B cell (primary cell): ENCODE measurements at regions of chr9 and their contacts with region 1.

Region 1: GRCh38 chr9:21789541-21790037 is 12.8 kb upstream of the MTAP start:
- DNase-seq: peak; percentile 86
- ATAC-seq: peak; percentile 97
- H3K4me3 ChIP-seq: peak overlapping the region; percentile 15 to 54 (median 46)
- H3K4me3 Mint-ChIP-seq: peak overlapping the region; percentile 77
- H3K27ac ChIP-seq: no peak overlapping the region
- H3K27ac Mint-ChIP-seq: peak overlapping the region; percentile 17
- H3K4me1 ChIP-seq: no peaks in the 10 kb centered on the region
- H3K4me1 Mint-ChIP-seq: peaks cover 3% of the 10 kb centered on the region
- H3K27me3 ChIP-seq: peaks cover 0 to 14% (median 6%) of the 10 kb centered on the region in 4 experiments
- H3K27me3 Mint-ChIP-seq: peaks cover 22% of the 10 kb centered on the region
- CTCF ChIP-seq: peak; percentile 99

Region 2: GRCh38 chr9:20884985-20885593 is 904.5 kb before region 1 on chr9:
- CTCF ChIA-PET with region 1: no interaction called
- POLR2A ChIA-PET with region 1: no interaction called
- intact Hi-C with region 1: no loop called
- DNase-seq: peak; percentile 45
- ATAC-seq: no peak
- H3K4me3 ChIP-seq: no peak overlapping the region
- H3K4me3 Mint-ChIP-seq: no peak overlapping the region
- H3K27ac ChIP-seq: no peak overlapping the region
- H3K27ac Mint-ChIP-seq: no peak overlapping the region
- H3K4me1 ChIP-seq: no peaks in the 10 kb centered on the region
- H3K4me1 Mint-ChIP-seq: no peaks in the 10 kb centered on the region
- H3K27me3 ChIP-seq: no peaks in the 10 kb centered on the region
- H3K27me3 Mint-ChIP-seq: no peaks in the 10 kb centered on the region
- CTCF ChIP-seq: peak; percentile 75

Region 3: DNA sequence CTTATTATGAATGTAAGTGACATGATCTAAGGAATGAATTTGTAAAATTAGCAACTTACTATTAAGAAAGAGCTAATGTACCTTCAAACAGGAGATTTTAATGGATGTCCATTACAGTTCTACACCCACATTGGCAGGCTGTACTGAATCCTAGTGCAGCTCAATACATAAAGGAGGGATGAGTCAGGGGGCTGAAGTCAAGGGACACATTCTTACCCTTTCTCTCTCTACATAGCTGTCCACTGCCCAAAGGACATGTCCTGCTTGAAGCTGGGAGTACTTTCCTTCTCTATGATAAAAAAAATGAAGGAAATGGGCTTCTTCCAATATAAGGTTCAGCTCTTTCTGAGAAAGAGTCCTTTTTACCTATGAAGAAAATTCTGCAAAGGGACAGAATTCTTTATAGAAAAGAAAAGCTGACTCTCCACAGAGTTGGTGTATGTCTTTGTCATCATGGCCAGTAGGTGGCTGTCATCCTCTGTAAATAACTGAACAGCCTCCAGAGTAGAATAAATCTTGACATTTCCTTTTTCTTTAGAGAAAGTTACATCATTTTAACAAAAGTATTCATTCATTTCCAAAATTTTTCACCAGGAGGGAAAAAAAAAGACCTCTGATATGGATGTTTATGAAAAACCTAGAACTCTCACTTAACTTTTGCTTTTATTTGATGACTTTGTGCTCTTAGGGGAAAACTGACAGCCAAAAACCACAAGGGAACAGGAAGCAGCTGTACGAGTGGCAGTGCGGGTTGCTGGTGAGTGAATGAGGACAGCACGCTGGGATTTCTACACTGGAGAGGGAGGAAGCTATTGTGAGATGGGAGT is 536.7 kb before region 1 on chr9:
- CTCF ChIA-PET with region 1: interaction called, 11 read pairs
- POLR2A ChIA-PET with region 1: no interaction called
- intact Hi-C with region 1: loop called (anchors 1 kb)
- DNase-seq: peak; percentile 23
- ATAC-seq: peak; percentile 43
- H3K4me3 ChIP-seq: no peak overlapping the region
- H3K4me3 Mint-ChIP-seq: no peak overlapping the region
- H3K27ac ChIP-seq: no peak overlapping the region
- H3K27ac Mint-ChIP-seq: no peak overlapping the region
- H3K4me1 ChIP-seq: peaks cover 2 to 3% of the 10 kb centered on the region in 2 donors
- H3K4me1 Mint-ChIP-seq: peaks cover 5% of the 10 kb centered on the region
- H3K27me3 ChIP-seq: no peaks in the 10 kb centered on the region
- H3K27me3 Mint-ChIP-seq: peaks cover 45% of the 10 kb centered on the region
- CTCF ChIP-seq: peak; percentile 69

Region 4: DNA sequence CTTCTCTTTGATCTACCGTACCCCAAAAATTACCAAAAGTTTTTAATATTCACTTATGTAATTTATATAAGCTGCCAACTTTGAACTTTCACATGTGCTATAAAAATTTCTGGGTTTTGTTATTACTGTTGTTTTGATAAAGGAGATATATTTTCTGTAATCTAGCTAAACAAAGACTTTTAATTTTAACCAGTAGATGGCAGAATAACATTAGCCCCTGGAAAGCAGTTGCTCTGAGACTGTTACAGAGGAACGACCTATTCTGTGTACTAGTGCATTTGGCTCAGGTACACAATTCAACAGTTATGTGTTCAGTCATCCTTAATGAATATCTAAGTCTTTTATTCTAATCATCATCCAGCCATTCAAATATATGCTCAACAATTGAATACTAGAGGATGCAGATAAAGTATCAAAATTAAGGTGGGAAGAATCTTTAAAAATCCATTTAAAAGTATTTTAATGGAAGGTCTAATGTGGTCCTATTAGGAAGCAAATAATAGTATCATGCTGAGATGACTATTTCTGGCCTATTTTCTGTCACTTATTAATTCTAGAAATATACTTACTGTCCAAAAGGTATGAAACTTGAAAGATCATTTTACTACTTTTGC is 463.0 kb before region 1 on chr9:
- CTCF ChIA-PET with region 1: interaction called, 24 read pairs
- POLR2A ChIA-PET with region 1: no interaction called
- intact Hi-C with region 1: loop called (anchors 1 kb)
- DNase-seq: peak; percentile 70
- ATAC-seq: peak; percentile 80
- H3K4me3 ChIP-seq: no peak overlapping the region
- H3K4me3 Mint-ChIP-seq: no peak overlapping the region
- H3K27ac ChIP-seq: no peak overlapping the region
- H3K27ac Mint-ChIP-seq: no peak overlapping the region
- H3K4me1 ChIP-seq: peaks cover 2 to 3% of the 10 kb centered on the region in 2 donors
- H3K4me1 Mint-ChIP-seq: peaks cover 26% of the 10 kb centered on the region
- H3K27me3 ChIP-seq: no peaks in the 10 kb centered on the region
- H3K27me3 Mint-ChIP-seq: no peaks in the 10 kb centered on the region
- CTCF ChIP-seq: peak; percentile 90

Region 5: GRCh38 chr9:21465859-21466518 is 323.6 kb before region 1 on chr9:
- CTCF ChIA-PET with region 1: interaction called, 3 read pairs
- POLR2A ChIA-PET with region 1: no interaction called
- intact Hi-C with region 1: loop called (anchors 10 kb)
- DNase-seq: peak; percentile 37
- ATAC-seq: no peak
- H3K4me3 ChIP-seq: no peak overlapping the region
- H3K4me3 Mint-ChIP-seq: no peak overlapping the region
- H3K27ac ChIP-seq: no peak overlapping the region
- H3K27ac Mint-ChIP-seq: no peak overlapping the region
- H3K4me1 ChIP-seq: no peaks in the 10 kb centered on the region
- H3K4me1 Mint-ChIP-seq: no peaks in the 10 kb centered on the region
- H3K27me3 ChIP-seq: peaks cover 0 to 14% (median 2%) of the 10 kb centered on the region in 4 experiments
- H3K27me3 Mint-ChIP-seq: peaks cover 29% of the 10 kb centered on the region
- CTCF ChIP-seq: peak; percentile 54

Region 6: GRCh38 chr9:21688108-21689102 is 101.2 kb before region 1 on chr9:
- CTCF ChIA-PET with region 1: no interaction called
- POLR2A ChIA-PET with region 1: no interaction called
- intact Hi-C with region 1: no loop called
- DNase-seq: no peak
- ATAC-seq: no peak
- H3K4me3 ChIP-seq: no peak overlapping the region
- H3K4me3 Mint-ChIP-seq: no peak overlapping the region
- H3K27ac ChIP-seq: no peak overlapping the region
- H3K27ac Mint-ChIP-seq: no peak overlapping the region
- H3K4me1 ChIP-seq: no peaks in the 10 kb centered on the region
- H3K4me1 Mint-ChIP-seq: no peaks in the 10 kb centered on the region
- H3K27me3 ChIP-seq: peaks cover 0 to 5% (median 0%) of the 10 kb centered on the region in 4 experiments
- H3K27me3 Mint-ChIP-seq: peaks cover 4% of the 10 kb centered on the region
- CTCF ChIP-seq: no peak

Region 7: GRCh38 chr9:21777701-21778100 is 11.9 kb before region 1 on chr9:
- CTCF ChIA-PET with region 1: interaction called, 10 read pairs
- POLR2A ChIA-PET with region 1: no interaction called
- intact Hi-C with region 1: no loop called
- DNase-seq: no peak
- ATAC-seq: no peak
- H3K4me3 ChIP-seq: no peak overlapping the region
- H3K4me3 Mint-ChIP-seq: no peak overlapping the region
- H3K27ac ChIP-seq: no peak overlapping the region
- H3K27ac Mint-ChIP-seq: no peak overlapping the region
- H3K4me1 ChIP-seq: peaks cover 0 to 7% of the 10 kb centered on the region in 2 donors
- H3K4me1 Mint-ChIP-seq: no peaks in the 10 kb centered on the region
- H3K27me3 ChIP-seq: peaks cover 0 to 3% (median 0%) of the 10 kb centered on the region in 4 experiments
- H3K27me3 Mint-ChIP-seq: peaks cover 4% of the 10 kb centered on the region
- CTCF ChIP-seq: no peak

Region 8: GRCh38 chr9:22030101-22030598 is 240.6 kb after region 1 on chr9:
- CTCF ChIA-PET with region 1: no interaction called
- POLR2A ChIA-PET with region 1: no interaction called
- intact Hi-C with region 1: no loop called
- DNase-seq: peak; percentile 52
- ATAC-seq: peak; percentile 53
- H3K4me3 ChIP-seq: no peak overlapping the region
- H3K4me3 Mint-ChIP-seq: no peak overlapping the region
- H3K27ac ChIP-seq: no peak overlapping the region
- H3K27ac Mint-ChIP-seq: no peak overlapping the region
- H3K4me1 ChIP-seq: peaks cover 3 to 6% of the 10 kb centered on the region in 2 donors
- H3K4me1 Mint-ChIP-seq: peaks cover 8% of the 10 kb centered on the region
- H3K27me3 ChIP-seq: no peaks in the 10 kb centered on the region
- H3K27me3 Mint-ChIP-seq: no peaks in the 10 kb centered on the region
- CTCF ChIP-seq: no peak